SK-N-SH (cell line): ENCODE measurements at regions of chr11 and their contacts with region 1.

Region 1: GRCh38 chr11:34585735-34586487 is 35.0 kb upstream of the EHF start:
- DNase-seq: peak; percentile 33
- H3K4me3 ChIP-seq: no peak overlapping the region; a peak in 1 of 4 replicates
- H3K27ac ChIP-seq: no peak overlapping the region
- H3K4me1 ChIP-seq: peaks cover 0 to 4% of the 10 kb centered on the region in 2 experiments; a peak in 1 of 4 replicates
- H3K27me3 ChIP-seq: peaks cover 4% of the 10 kb centered on the region; the same call in 1 of the 2 replicates
- CTCF ChIP-seq: peak; percentile 74
- EP300 ChIP-seq: no peak
- RAD21 ChIP-seq: peak; percentile 82

Region 2: GRCh38 chr11:34512840-34513681 is 72.8 kb before region 1 on chr11:
- CTCF ChIA-PET with region 1: interaction called, 11 read pairs
- POLR2A ChIA-PET with region 1: no interaction called
- DNase-seq: peak; percentile 78
- H3K4me3 ChIP-seq: peak overlapping the region in 1 of 2 experiments; percentile 31; a peak in 1 of 4 replicates
- H3K27ac ChIP-seq: no peak overlapping the region
- H3K4me1 ChIP-seq: peaks cover 0 to 3% of the 10 kb centered on the region in 2 experiments; a peak in 2 of 4 replicates
- H3K27me3 ChIP-seq: no peaks in the 10 kb centered on the region; the same call in 1 of the 2 replicates
- CTCF ChIP-seq: peak; percentile 75
- EP300 ChIP-seq: no peak
- RAD21 ChIP-seq: peak; percentile 59

Region 3: DNA sequence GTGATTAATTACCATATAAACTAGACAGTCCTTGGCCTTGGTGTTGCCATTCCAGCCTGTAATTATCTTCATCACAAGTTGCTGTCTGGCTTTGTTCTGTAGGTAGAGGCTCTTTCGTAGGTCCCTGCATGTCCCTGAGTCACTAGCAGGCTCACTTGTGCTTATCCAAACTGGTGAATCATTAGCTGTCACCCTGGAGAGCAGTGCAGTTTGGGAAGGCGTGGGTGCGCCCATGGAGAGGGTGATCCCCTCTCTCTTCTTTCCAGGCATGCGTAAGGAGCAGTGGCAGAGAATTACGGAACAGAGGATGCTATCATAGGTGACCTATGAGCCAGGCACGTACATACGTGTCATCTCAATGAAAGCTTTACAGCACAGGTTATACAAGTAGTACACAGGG is 23.9 kb after region 1 on chr11:
- CTCF ChIA-PET with region 1: interaction called, 13 read pairs
- POLR2A ChIA-PET with region 1: no interaction called
- DNase-seq: no peak
- H3K4me3 ChIP-seq: no peak overlapping the region
- H3K27ac ChIP-seq: no peak overlapping the region
- H3K4me1 ChIP-seq: no peaks in the 10 kb centered on the region
- H3K27me3 ChIP-seq: no peaks in the 10 kb centered on the region
- CTCF ChIP-seq: no peak
- EP300 ChIP-seq: no peak
- RAD21 ChIP-seq: no peak

Region 4: DNA sequence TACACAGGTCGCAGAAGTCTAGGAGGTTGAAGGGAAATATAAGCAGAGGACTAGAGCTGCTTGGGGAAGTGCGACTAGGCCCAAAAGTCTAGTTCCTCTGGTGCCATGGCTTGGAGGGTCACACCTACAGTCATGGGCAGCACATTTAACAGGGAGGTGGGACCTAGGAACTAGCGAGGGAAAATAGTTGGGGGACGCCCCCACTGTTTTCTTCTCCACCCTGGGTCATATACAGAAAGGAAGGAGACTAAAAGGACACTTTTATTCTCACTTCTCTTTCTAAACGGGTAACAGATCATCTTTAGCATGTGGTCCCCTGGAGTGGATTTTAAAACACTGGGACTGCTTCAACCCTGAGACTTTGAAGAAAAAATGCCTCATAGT is 313.7 kb after region 1 on chr11:
- CTCF ChIA-PET with region 1: interaction called, 30 read pairs
- POLR2A ChIA-PET with region 1: no interaction called
- DNase-seq: no peak
- H3K4me3 ChIP-seq: no peak overlapping the region
- H3K27ac ChIP-seq: no peak overlapping the region
- H3K4me1 ChIP-seq: no peaks in the 10 kb centered on the region
- H3K27me3 ChIP-seq: no peaks in the 10 kb centered on the region
- CTCF ChIP-seq: no peak
- EP300 ChIP-seq: no peak
- RAD21 ChIP-seq: no peak

Region 5: GRCh38 chr11:35412285-35412684 is 826.4 kb after region 1 on chr11:
- CTCF ChIA-PET with region 1: interaction called, 13 read pairs
- POLR2A ChIA-PET with region 1: no interaction called
- DNase-seq: peak; percentile 63
- H3K4me3 ChIP-seq: no peak overlapping the region; a peak in 1 of 4 replicates
- H3K27ac ChIP-seq: no peak overlapping the region
- H3K4me1 ChIP-seq: no peaks in the 10 kb centered on the region
- H3K27me3 ChIP-seq: peaks cover 31% of the 10 kb centered on the region; the same call in 1 of the 2 replicates
- CTCF ChIP-seq: peak; percentile 62
- EP300 ChIP-seq: no peak
- RAD21 ChIP-seq: peak; percentile 75